Activated CD4-positive, alpha-beta T cell treated with anti-CD3 and anti-CD28 coated beads, Interleukin-2, amount 10 ng/mL, durations not matched to agents 24 days and 14 days (primary cell): ENCODE measurements at regions of chr7 and their contacts with region 1.

Region 1: GRCh38 chr7:17298207-17298839 is at the start of gene AHR:
- DNase-seq: peak; percentile 90
- H3K4me3 Mint-ChIP-seq: peak within 1 kb of the TSS; percentile 96
- H3K27ac Mint-ChIP-seq: peak within 1 kb of the TSS; percentile 97
- H3K4me1 Mint-ChIP-seq: peaks cover 23% of the 10 kb centered on the region
- H3K27me3 Mint-ChIP-seq: peaks cover 2% of the 10 kb centered on the region
- total RNA-seq, gene AHR: 28.2 and 30.7 TPM in 2 replicates

Region 2: GRCh38 chr7:16619979-16620408 is 678.3 kb before region 1 on chr7:
- intact Hi-C with region 1: loop called (anchors 10 kb)
- DNase-seq: peak; percentile 57
- H3K4me3 Mint-ChIP-seq: peak overlapping the region; percentile 43
- H3K27ac Mint-ChIP-seq: peak overlapping the region; percentile 82
- H3K4me1 Mint-ChIP-seq: peaks cover 10% of the 10 kb centered on the region
- H3K27me3 Mint-ChIP-seq: no peaks in the 10 kb centered on the region

Region 3: GRCh38 chr7:16999541-17000267 is 298.6 kb before region 1 on chr7:
- intact Hi-C with region 1: loop called (anchors 1 kb)
- DNase-seq: peak; percentile 76
- H3K4me3 Mint-ChIP-seq: peak overlapping the region; percentile 63
- H3K27ac Mint-ChIP-seq: peak overlapping the region; percentile 84
- H3K4me1 Mint-ChIP-seq: peaks cover 15% of the 10 kb centered on the region
- H3K27me3 Mint-ChIP-seq: peaks cover 6% of the 10 kb centered on the region

Region 4: DNA sequence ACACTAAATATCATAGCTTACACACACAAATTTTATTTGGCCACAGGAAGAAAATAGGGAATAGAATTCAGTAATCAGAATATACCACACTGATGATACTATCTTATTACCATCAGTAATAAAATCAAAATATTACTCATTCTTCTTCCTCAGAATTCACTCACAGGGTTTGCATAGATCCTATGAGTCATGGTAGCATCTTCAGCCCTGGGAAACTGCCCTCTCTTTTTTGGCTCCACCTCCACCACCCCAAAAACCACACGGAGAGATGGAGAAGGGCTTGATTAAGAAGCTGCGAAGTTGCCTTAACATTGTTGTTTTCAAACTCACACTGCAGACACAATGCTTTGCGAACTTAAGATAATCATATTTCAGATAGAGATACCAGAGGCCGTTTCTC is 154.0 kb before region 1 on chr7:
- intact Hi-C with region 1: loop called (anchors 1 kb)
- DNase-seq: peak; percentile 87
- H3K4me3 Mint-ChIP-seq: peak overlapping the region; percentile 54
- H3K27ac Mint-ChIP-seq: peak overlapping the region; percentile 81
- H3K4me1 Mint-ChIP-seq: peaks cover 49% of the 10 kb centered on the region
- H3K27me3 Mint-ChIP-seq: peaks cover 2% of the 10 kb centered on the region

Region 5: GRCh38 chr7:17274551-17275245 is 23.6 kb before region 1 on chr7:
- intact Hi-C with region 1: loop called (anchors 1 kb)
- DNase-seq: peak; percentile 57
- H3K4me3 Mint-ChIP-seq: no peak overlapping the region
- H3K27ac Mint-ChIP-seq: no peak overlapping the region
- H3K4me1 Mint-ChIP-seq: peaks cover 11% of the 10 kb centered on the region
- H3K27me3 Mint-ChIP-seq: no peaks in the 10 kb centered on the region

Region 6: GRCh38 chr7:17530741-17531417 is 232.6 kb after region 1 on chr7:
- intact Hi-C with region 1: loop called (anchors 5 kb)
- DNase-seq: no peak
- H3K4me3 Mint-ChIP-seq: no peak overlapping the region
- H3K27ac Mint-ChIP-seq: no peak overlapping the region
- H3K4me1 Mint-ChIP-seq: peaks cover 9% of the 10 kb centered on the region
- H3K27me3 Mint-ChIP-seq: peaks cover 3% of the 10 kb centered on the region